Common myeloid progenitor, CD34-positive (primary cell): ENCODE measurements at regions of chr10 and their contacts with region 1.

Region 1: DNA sequence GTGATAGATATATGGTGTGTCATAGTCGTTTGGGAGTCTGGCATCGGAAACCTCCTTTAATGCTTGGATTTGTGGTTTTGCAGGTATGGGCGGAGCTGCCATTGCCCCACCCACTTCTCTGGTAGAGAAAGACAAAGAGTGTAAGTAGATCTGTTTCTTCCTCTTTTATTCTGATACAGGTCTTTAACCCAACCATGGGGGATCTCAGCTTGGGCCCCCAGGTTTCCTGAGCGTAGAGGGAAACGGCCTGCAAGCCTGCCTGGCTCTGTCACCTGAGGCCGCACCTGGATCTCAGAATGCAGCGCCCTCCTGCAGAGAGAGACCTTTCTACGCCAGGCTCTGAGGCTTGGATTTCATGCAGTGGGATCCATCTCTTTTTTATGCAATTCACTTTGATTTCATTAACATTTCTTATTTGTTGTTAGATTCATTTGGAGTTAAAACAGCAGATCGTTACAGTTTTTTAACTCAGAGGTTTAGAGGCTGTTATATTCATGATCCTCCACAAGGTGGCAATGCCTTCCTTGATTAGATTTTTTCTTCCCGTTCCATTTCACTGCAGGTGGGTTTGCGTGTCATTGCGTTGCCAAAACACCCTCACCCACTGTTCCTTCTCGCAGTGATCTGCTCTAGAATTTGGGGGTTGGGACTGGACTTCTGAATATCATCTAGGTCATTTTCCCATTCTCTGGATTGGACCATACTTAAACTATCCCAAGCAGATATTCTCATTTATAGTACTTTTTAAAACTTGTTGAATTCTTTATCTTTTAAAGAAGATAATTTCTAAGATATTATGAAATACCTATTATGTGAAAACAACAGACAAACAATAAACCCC is 20.0 kb downstream of the RBM17 start:
- DNase-seq: peak; percentile 64 to 81 (median 78)
- H3K4me3 ChIP-seq: no peak overlapping the region
- H3K27ac ChIP-seq: peak overlapping the region in 1 of 2 experiments; percentile 6
- H3K4me1 ChIP-seq: peaks cover 0 to 9% (median 4%) of the 10 kb centered on the region in 4 experiments
- H3K27me3 ChIP-seq: no peaks in the 10 kb centered on the region

Region 2: GRCh38 chr10:6120691-6121090 is 11.9 kb after region 1 on chr10:
- CTCF ChIA-PET with region 1: interaction called, 13 read pairs
- POLR2A ChIA-PET with region 1: no interaction called
- DNase-seq: no peak
- H3K4me3 ChIP-seq: no peak overlapping the region
- H3K27ac ChIP-seq: no peak overlapping the region
- H3K4me1 ChIP-seq: peaks cover 8 to 29% (median 19%) of the 10 kb centered on the region in 4 experiments
- H3K27me3 ChIP-seq: no peaks in the 10 kb centered on the region

Region 3: GRCh38 chr10:6409971-6410651 is 301.3 kb after region 1 on chr10:
- CTCF ChIA-PET with region 1: interaction called, 16 read pairs
- POLR2A ChIA-PET with region 1: no interaction called
- DNase-seq: peak; percentile 17 to 77 (median 69)
- H3K4me3 ChIP-seq: peak overlapping the region in 1 of 7 experiments; percentile 20
- H3K27ac ChIP-seq: peak overlapping the region in 1 of 2 experiments; percentile 29
- H3K4me1 ChIP-seq: peaks cover 4 to 10% (median 8%) of the 10 kb centered on the region in 4 experiments
- H3K27me3 ChIP-seq: no peaks in the 10 kb centered on the region